ENCODE measurements at regions of chr4 and their contacts with region 1.

Region 1: GRCh38 chr4:82865592-82865991 is 25.4 kb downstream of the SEC31A start:
- DNase-seq: peak; percentile 25
- H3K4me3 Mint-ChIP-seq: peak overlapping the region; percentile 4
- H3K27ac Mint-ChIP-seq: peak overlapping the region; percentile 78
- H3K4me1 Mint-ChIP-seq: peaks cover 33% of the 10 kb centered on the region
- H3K27me3 Mint-ChIP-seq: no peaks in the 10 kb centered on the region

Region 2: DNA sequence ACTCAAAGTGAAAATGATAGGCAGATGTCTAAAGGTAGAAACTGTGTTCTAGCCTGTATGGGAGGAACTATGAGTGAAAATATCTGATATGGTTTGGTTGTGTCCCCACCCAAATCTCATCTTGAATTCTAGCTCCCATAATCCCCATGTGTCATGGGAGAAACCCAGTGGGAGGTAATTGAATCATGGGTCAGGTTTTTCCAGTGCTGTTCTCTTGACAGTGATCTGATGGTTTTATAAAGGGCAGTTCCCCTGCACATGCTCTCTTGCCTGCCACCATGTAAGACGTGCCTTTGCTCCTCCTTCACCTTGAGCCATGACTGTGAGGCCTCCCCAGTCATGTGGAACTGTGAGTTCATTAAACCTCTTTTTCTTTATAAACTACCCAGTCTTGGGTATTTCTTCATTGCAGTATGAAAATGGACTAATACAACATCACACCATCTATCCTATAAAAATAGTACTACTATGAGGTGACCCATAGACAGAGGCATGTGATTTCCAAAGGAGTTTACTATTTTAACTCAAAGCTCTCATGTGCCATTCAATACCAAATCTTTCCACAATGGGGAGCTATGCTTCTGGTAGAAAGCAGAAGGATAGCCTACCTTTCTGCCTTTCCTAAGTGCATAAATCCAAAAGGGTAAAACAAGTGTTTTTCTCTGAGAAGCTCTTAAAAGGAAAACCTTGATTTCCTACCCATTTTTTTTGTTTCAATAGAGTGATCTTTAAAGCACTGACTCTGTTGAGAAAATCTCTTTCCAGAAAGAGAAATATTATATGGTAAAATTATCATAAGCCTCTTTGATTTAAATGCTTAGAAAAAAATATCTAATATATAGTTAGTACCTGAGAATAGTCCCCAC is 13.5 kb before region 1 on chr4:
- CTCF ChIA-PET with region 1: interaction called, 11 read pairs
- POLR2A ChIA-PET with region 1: interaction called, 11 read pairs
- DNase-seq: no peak
- H3K4me3 Mint-ChIP-seq: no peak overlapping the region
- H3K27ac Mint-ChIP-seq: no peak overlapping the region
- H3K4me1 Mint-ChIP-seq: peaks cover 3% of the 10 kb centered on the region
- H3K27me3 Mint-ChIP-seq: no peaks in the 10 kb centered on the region

Region 3: DNA sequence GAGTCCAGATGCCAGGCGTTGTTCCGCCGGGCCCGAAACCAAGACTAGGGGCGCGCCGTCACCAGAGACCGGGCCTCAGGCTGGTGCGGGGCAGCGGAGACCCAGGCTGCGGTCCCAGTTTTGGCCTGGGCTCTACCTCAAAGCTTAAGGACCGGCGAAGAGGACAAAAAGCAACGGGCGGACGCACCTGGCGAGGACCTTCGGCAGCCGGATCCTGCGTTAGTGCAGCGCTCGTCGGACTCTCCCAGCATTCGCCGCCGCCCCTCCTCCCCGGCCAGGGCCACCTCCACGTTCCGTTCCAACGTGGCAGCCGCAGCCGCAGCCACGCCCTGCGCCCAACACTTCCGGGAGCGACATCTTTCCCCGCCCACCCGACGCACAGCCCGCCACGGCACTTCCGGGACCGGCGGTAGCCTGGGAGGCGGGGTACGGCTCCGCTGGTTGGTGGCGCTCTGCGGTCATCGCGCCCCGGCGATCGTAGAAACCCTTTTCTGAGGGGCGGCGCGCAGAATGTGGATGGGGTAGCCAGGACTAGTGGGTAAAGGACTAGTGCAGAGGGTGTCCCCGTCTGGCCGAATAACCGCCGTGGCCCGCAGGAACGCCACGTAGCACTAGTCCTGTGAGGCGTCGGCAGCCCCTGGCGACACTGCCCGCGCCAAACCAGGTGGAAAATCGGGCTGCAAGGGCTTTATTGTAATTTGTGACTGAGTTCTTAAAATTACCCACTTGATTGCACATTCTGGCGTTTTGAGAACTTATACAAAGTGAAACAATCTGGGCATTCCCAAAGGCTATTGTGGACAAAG is 25.5 kb after region 1 on chr4 and contains the start of gene SEC31A:
- CTCF ChIA-PET with region 1: interaction called, 10 read pairs
- POLR2A ChIA-PET with region 1: interaction called, 18 read pairs
- DNase-seq: peak; percentile 98
- H3K4me3 Mint-ChIP-seq: peak within 1 kb of the TSS; percentile 83
- H3K27ac Mint-ChIP-seq: peak within 1 kb of the TSS; percentile 88
- H3K4me1 Mint-ChIP-seq: peaks cover 54% of the 10 kb centered on the region
- H3K27me3 Mint-ChIP-seq: no peaks in the 10 kb centered on the region
- total RNA-seq, gene SEC31A: 102 to 108 TPM

Region 4: GRCh38 chr4:82900331-82901128 is 34.9 kb after region 1 on chr4 and contains the start of gene THAP9:
- CTCF ChIA-PET with region 1: interaction called, 13 read pairs
- POLR2A ChIA-PET with region 1: interaction called, 11 read pairs
- DNase-seq: peak; percentile 99
- H3K4me3 Mint-ChIP-seq: no peak within 1 kb of the TSS
- H3K27ac Mint-ChIP-seq: no peak within 1 kb of the TSS
- H3K4me1 Mint-ChIP-seq: peaks cover 37% of the 10 kb centered on the region
- H3K27me3 Mint-ChIP-seq: peaks cover 9% of the 10 kb centered on the region
- total RNA-seq, gene THAP9: 2.0 to 2.4 TPM